B cell (primary cell): ENCODE measurements at regions of chr1 and their contacts with region 1.

Region 1: DNA sequence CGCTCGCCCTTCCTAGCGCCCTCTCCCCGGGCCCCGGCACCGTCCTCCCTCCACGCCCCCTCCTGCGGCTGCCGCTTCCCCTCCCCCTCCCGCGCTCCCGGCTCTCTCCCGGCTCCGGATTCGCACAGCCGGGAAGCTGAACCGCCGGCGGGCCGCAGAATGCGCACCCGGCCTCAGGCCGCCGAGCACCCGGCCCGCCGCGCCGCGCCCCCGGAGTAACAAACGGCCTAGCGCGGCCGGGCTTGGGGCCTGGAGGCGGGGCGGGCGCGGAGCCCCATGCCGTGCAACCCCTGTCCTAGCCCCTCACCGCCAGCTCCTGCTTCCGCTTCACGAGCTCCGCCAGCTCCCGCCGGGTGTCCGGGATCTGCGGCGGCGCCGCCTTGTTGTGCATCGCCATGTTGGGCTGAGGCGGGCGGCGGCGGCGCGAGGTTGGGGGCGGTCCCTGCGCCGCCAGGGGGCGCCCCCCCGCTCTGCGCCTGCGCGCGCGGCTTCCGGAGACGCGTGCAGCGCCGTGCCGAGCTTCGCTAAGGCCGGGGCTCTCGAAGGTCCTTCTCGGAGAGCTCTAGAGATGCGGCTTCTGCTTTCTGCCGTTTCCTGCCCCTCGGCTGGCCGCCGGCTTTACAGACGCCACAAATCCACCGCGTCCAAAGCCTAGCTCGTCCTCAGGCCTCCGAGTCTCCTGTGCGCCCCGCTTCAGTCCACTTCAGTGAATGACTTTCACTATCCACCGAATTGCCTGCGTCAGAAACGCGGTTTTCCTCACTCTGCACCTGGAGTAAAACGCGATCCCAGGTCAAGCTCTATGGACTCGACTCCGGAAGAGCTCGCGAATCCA is at the start of gene MEAF6:
- DNase-seq: peak; percentile 93
- ATAC-seq: peak; percentile 97
- H3K4me3 ChIP-seq: peak within 1 kb of the TSS; percentile 57 to 80 (median 77)
- H3K4me3 Mint-ChIP-seq: peak within 1 kb of the TSS; percentile 99
- H3K27ac ChIP-seq: peak within 1 kb of the TSS; percentile 78 to 87
- H3K27ac Mint-ChIP-seq: peak within 1 kb of the TSS; percentile 99
- H3K4me1 ChIP-seq: peaks cover 14 to 22% of the 10 kb centered on the region in 2 donors
- H3K4me1 Mint-ChIP-seq: peaks cover 39% of the 10 kb centered on the region
- H3K27me3 ChIP-seq: no peaks in the 10 kb centered on the region
- H3K27me3 Mint-ChIP-seq: no peaks in the 10 kb centered on the region
- CTCF ChIP-seq: peak; percentile 84
- total RNA-seq, gene MEAF6: 82.0 and 84.2 TPM in 2 replicates

Region 2: DNA sequence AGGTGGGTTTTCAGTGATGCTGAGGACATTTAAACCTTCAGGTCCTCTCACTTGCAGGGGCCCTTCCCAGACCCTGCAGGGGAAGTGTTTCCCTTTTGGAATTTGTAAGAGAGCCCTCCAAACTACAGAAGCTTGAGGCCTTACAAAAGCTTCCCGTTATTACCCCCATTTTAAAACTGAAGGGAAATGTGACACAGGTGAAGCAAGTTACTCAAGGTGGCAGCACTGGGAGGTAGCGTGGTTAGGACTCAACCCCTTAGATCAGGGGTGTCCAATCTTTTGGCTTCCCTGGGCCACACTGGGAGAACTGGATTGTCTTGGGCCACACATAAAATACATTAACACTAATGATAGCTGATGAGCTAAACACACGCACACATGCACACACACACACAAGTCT is 56.0 kb before region 1 on chr1:
- CTCF ChIA-PET with region 1: interaction called, 21 read pairs
- POLR2A ChIA-PET with region 1: no interaction called
- intact Hi-C with region 1: no loop called
- DNase-seq: no peak
- ATAC-seq: no peak
- H3K4me3 ChIP-seq: no peak overlapping the region
- H3K4me3 Mint-ChIP-seq: no peak overlapping the region
- H3K27ac ChIP-seq: no peak overlapping the region
- H3K27ac Mint-ChIP-seq: no peak overlapping the region
- H3K4me1 ChIP-seq: peaks cover 0 to 6% of the 10 kb centered on the region in 2 donors
- H3K4me1 Mint-ChIP-seq: peaks cover 4% of the 10 kb centered on the region
- H3K27me3 ChIP-seq: peaks cover 0 to 2% (median 0%) of the 10 kb centered on the region in 4 experiments
- H3K27me3 Mint-ChIP-seq: no peaks in the 10 kb centered on the region
- CTCF ChIP-seq: no peak

Region 3: GRCh38 chr1:37479255-37480124 is 35.1 kb before region 1 on chr1:
- CTCF ChIA-PET with region 1: interaction called, 27 read pairs
- POLR2A ChIA-PET with region 1: interaction called, 9 read pairs
- intact Hi-C with region 1: loop called (anchors 1 kb)
- DNase-seq: peak; percentile 79
- ATAC-seq: peak; percentile 50
- H3K4me3 ChIP-seq: peak overlapping the region; percentile 94 to 99 (median 98)
- H3K4me3 Mint-ChIP-seq: peak overlapping the region; percentile 100
- H3K27ac ChIP-seq: peak overlapping the region; percentile 96 to 97
- H3K27ac Mint-ChIP-seq: peak overlapping the region; percentile 98
- H3K4me1 ChIP-seq: peaks cover 32 to 66% of the 10 kb centered on the region in 2 donors
- H3K4me1 Mint-ChIP-seq: peaks cover 60% of the 10 kb centered on the region
- H3K27me3 ChIP-seq: no peaks in the 10 kb centered on the region
- H3K27me3 Mint-ChIP-seq: no peaks in the 10 kb centered on the region
- CTCF ChIP-seq: no peak

Region 4: DNA sequence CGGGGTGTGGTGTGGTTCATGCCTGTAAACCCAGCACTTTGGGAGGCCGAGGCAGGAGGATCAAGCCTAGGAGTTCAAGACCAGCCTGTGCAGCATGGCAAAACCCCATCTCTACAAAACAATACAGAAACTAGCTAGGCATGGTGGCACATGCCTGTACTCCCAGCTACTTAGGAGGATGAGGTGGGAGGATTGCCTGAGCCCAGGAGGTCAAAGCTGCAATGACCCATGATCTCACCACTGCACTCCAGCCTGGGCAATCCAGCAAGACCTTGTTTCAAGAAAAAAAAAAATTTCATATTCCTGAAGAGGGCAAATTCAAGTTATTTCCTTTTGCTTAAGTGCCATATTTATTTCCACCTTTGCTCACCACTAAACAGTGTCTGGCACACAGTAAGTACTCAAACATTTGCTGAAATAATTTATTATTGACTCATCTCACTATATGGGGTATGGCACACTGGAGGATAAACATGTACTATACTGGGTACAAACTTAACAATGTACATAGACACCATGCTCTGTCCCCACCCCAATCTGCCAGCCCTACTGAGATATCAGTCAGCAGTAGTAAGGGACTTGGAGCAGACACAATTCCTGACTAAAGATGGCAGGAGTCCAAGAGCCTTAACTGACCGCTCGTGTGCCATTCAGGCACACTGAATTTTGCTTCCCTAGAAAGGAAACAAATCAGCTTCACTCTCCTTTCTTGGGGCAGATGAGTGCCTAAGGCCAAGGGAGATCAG is 15.5 kb before region 1 on chr1:
- CTCF ChIA-PET with region 1: interaction called, 10 read pairs
- POLR2A ChIA-PET with region 1: no interaction called
- intact Hi-C with region 1: no loop called
- DNase-seq: no peak
- ATAC-seq: no peak
- H3K4me3 ChIP-seq: no peak overlapping the region
- H3K4me3 Mint-ChIP-seq: no peak overlapping the region
- H3K27ac ChIP-seq: no peak overlapping the region
- H3K27ac Mint-ChIP-seq: no peak overlapping the region
- H3K4me1 ChIP-seq: no peaks in the 10 kb centered on the region
- H3K4me1 Mint-ChIP-seq: no peaks in the 10 kb centered on the region
- H3K27me3 ChIP-seq: no peaks in the 10 kb centered on the region
- H3K27me3 Mint-ChIP-seq: no peaks in the 10 kb centered on the region
- CTCF ChIP-seq: no peak

Region 5: GRCh38 chr1:37595440-37596319 is 81.1 kb after region 1 on chr1 and contains the start of gene GNL2:
- CTCF ChIA-PET with region 1: interaction called, 7 read pairs
- POLR2A ChIA-PET with region 1: no interaction called
- intact Hi-C with region 1: loop called (anchors 1 kb)
- DNase-seq: peak; percentile 99
- ATAC-seq: peak; percentile 98
- H3K4me3 ChIP-seq: peak within 1 kb of the TSS; percentile 67 to 96 (median 92)
- H3K4me3 Mint-ChIP-seq: peak within 1 kb of the TSS; percentile 99
- H3K27ac ChIP-seq: peak within 1 kb of the TSS; percentile 77 to 90
- H3K27ac Mint-ChIP-seq: peak within 1 kb of the TSS; percentile 93
- H3K4me1 ChIP-seq: peaks cover 16 to 20% of the 10 kb centered on the region in 2 donors
- H3K4me1 Mint-ChIP-seq: peaks cover 26% of the 10 kb centered on the region
- H3K27me3 ChIP-seq: peaks cover 0 to 3% (median 0%) of the 10 kb centered on the region in 4 experiments
- H3K27me3 Mint-ChIP-seq: no peaks in the 10 kb centered on the region
- CTCF ChIP-seq: no peak
- total RNA-seq, gene GNL2: 44.0 and 50.6 TPM in 2 replicates

Region 6: GRCh38 chr1:37692078-37692833 is 177.7 kb after region 1 on chr1 and contains the start of gene CDCA8:
- CTCF ChIA-PET with region 1: interaction called, 3 read pairs
- POLR2A ChIA-PET with region 1: interaction called, 3 read pairs
- intact Hi-C with region 1: loop called (anchors 1 kb)
- DNase-seq: peak; percentile 99
- ATAC-seq: peak; percentile 89
- H3K4me3 ChIP-seq: peak within 1 kb of the TSS; percentile 52 to 91 (median 74)
- H3K4me3 Mint-ChIP-seq: peak within 1 kb of the TSS; percentile 99
- H3K27ac ChIP-seq: peak within 1 kb of the TSS; percentile 19 to 65
- H3K27ac Mint-ChIP-seq: peak within 1 kb of the TSS; percentile 94
- H3K4me1 ChIP-seq: peaks cover 19 to 34% of the 10 kb centered on the region in 2 donors
- H3K4me1 Mint-ChIP-seq: peaks cover 40% of the 10 kb centered on the region
- H3K27me3 ChIP-seq: no peaks in the 10 kb centered on the region
- H3K27me3 Mint-ChIP-seq: no peaks in the 10 kb centered on the region
- CTCF ChIP-seq: peak; percentile 67
- total RNA-seq, gene CDCA8: 1.3 and 1.5 TPM in 2 replicates